H1 (cell line): ENCODE measurements at regions of chr16 and their contacts with region 1.

Region 1: GRCh38 chr16:4330277-4330874 is 14.5 kb downstream of the GLIS2 start:
- DNase-seq: peak in 1 of 2 experiments; percentile 91
- H3K4me3 ChIP-seq: no peak overlapping the region
- H3K27ac ChIP-seq: no peak overlapping the region
- H3K4me1 ChIP-seq: peaks cover 5 to 14% (median 10%) of the 10 kb centered on the region in 4 experiments
- H3K27me3 ChIP-seq: no peaks in the 10 kb centered on the region
- CTCF ChIP-seq: peak; percentile 84 to 98 (median 97)
- EP300 ChIP-seq: no peak
- POLR2A ChIP-seq: no peak
- RAD21 ChIP-seq: peak; percentile 86 to 94

Region 2: GRCh38 chr16:4277987-4278513 is 52.3 kb before region 1 on chr16:
- CTCF ChIA-PET with region 1: interaction called, 34 read pairs
- POLR2A ChIA-PET with region 1: interaction called, 69 read pairs
- DNase-seq: no peak
- H3K4me3 ChIP-seq: no peak overlapping the region
- H3K27ac ChIP-seq: no peak overlapping the region
- H3K4me1 ChIP-seq: no peaks in the 10 kb centered on the region; a peak in 3 of 7 replicates
- H3K27me3 ChIP-seq: no peaks in the 10 kb centered on the region; a peak in 1 of 7 replicates
- CTCF ChIP-seq: no peak
- EP300 ChIP-seq: no peak
- POLR2A ChIP-seq: no peak
- RAD21 ChIP-seq: no peak

Region 3: DNA sequence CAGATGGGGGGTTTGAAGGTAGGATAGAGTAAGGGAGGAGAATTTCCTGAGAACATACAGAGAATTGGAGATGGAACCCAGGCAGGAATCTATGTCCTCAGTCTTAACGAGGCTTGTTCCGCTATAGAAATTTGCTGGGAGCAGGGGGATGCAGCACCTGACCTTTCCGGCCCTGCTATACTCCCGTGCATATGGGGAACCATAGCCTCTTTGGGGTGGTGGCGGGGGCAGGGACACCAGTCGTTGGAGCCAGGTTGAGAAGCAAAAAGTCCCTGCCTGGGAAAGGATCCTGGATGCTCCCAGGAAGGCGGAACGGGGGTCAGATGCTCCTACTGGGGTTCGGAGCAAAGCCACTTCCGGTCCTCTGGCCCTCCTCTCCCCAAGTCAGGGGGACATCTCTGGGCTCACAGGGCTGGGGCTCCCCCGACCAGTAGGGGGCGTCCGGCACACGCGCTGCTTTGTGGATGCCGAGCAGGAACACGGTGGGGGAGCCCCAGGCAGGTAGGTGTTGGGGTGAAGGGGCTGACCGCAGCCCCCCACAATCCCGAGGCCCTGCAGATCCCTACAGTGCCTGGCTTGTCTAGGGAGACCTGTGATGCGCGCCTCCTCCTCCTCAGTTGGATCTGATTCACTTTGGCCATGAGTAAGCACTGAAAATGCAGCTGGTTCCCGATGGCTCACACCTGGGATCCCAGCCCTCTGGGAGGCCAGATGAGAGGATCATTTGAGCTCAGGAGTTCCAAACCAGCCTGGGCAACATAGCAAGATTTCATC is 42.0 kb before region 1 on chr16:
- CTCF ChIA-PET with region 1: interaction called, 132 read pairs
- POLR2A ChIA-PET with region 1: interaction called, 12 read pairs
- DNase-seq: peak in 1 of 2 experiments; percentile 98
- H3K4me3 ChIP-seq: peak overlapping the region in 2 of 4 experiments; percentile 2 to 16; a peak in 2 of 8 replicates
- H3K27ac ChIP-seq: peak overlapping the region; percentile 38; the same call in 1 of the 2 replicates
- H3K4me1 ChIP-seq: peaks cover 3 to 17% (median 8%) of the 10 kb centered on the region in 4 experiments
- H3K27me3 ChIP-seq: no peaks in the 10 kb centered on the region
- CTCF ChIP-seq: peak; percentile 94 to 98 (median 98)
- EP300 ChIP-seq: no peak
- POLR2A ChIP-seq: no peak
- RAD21 ChIP-seq: peak; percentile 84 to 93

Region 4: DNA sequence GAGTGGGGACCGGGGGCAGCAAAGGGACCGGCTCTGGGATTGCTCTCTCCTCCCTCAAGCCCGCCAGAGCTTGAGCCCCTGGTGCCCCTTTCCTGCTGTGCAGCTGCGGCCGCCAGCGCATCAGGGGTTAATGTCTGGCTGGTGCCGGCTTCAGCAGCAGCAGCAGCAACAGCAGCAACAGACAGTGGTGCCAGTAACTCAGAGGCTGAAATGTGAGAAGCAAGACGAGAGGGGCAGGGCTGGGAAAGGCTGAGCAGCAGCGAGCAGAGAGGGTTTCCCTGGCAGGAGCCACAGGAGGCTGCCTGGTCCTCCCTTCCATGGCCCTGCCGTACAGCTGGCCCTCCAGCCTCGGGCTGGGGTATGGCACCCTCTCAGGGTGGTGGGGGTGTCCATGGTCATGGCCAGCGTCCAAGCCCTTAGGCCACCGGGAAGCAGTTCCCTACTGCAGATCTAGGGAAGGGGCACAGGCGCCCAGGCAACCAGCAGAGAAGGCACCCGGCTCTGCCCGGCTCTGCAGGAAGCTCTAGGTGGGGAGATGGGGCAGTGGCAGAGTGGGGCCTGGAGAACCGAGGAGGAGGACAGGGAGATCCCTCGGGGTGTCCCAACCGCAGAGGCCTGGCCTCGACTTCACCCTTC is 36.4 kb before region 1 on chr16:
- CTCF ChIA-PET with region 1: interaction called, 132 read pairs
- POLR2A ChIA-PET with region 1: interaction called, 12 read pairs
- DNase-seq: peak in 1 of 2 experiments; percentile 82
- H3K4me3 ChIP-seq: peak overlapping the region in 3 of 4 experiments; percentile 24 to 50 (median 34); a peak in 6 of 8 replicates
- H3K27ac ChIP-seq: peak overlapping the region; percentile 67
- H3K4me1 ChIP-seq: peaks cover 7 to 23% (median 15%) of the 10 kb centered on the region in 4 experiments
- H3K27me3 ChIP-seq: no peaks in the 10 kb centered on the region
- CTCF ChIP-seq: peak in 1 of 3 experiments; percentile 1; a peak in 1 of 4 replicates
- EP300 ChIP-seq: peak in 1 of 2 experiments; percentile 65; a peak in 1 of 3 replicates
- POLR2A ChIP-seq: peak in 1 of 2 experiments; percentile 26; a peak in 1 of 3 replicates
- RAD21 ChIP-seq: peak in 1 of 2 experiments; percentile 25; a peak in 1 of 4 replicates

Region 5: GRCh38 chr16:4315186-4316109 is 14.9 kb before region 1 on chr16 and contains the start of gene GLIS2:
- CTCF ChIA-PET with region 1: interaction called, 182 read pairs
- POLR2A ChIA-PET with region 1: interaction called, 80 read pairs
- DNase-seq: peak in 1 of 2 experiments; percentile 73
- H3K4me3 ChIP-seq: peak within 1 kb of the TSS; percentile 63 to 92 (median 68)
- H3K27ac ChIP-seq: peak within 1 kb of the TSS; percentile 39; the same call in 1 of the 2 replicates
- H3K4me1 ChIP-seq: peaks cover 0 to 39% (median 33%) of the 10 kb centered on the region in 4 experiments; a peak in 6 of 7 replicates
- H3K27me3 ChIP-seq: peaks cover 0 to 15% (median 11%) of the 10 kb centered on the region in 4 experiments; a peak in 6 of 7 replicates
- CTCF ChIP-seq: no peak
- EP300 ChIP-seq: no peak
- POLR2A ChIP-seq: no peak; a peak in 1 of 3 replicates
- RAD21 ChIP-seq: no peak
- total RNA-seq, gene GLIS2: 17.4 and 18.6 TPM in 2 replicates

Region 6: GRCh38 chr16:4350787-4351659 is 20.6 kb after region 1 on chr16 and contains the start of gene PAM16:
- CTCF ChIA-PET with region 1: interaction called, 10 read pairs
- POLR2A ChIA-PET with region 1: interaction called, 154 read pairs
- DNase-seq: peak; percentile 87 to 100
- H3K4me3 ChIP-seq: peak within 1 kb of the TSS; percentile 91 to 97 (median 96)
- H3K27ac ChIP-seq: peak within 1 kb of the TSS; percentile 85
- H3K4me1 ChIP-seq: peaks cover 0 to 4% (median 0%) of the 10 kb centered on the region in 4 experiments; a peak in 1 of 7 replicates
- H3K27me3 ChIP-seq: peaks cover 0 to 2% (median 0%) of the 10 kb centered on the region in 4 experiments; a peak in 1 of 7 replicates
- CTCF ChIP-seq: no peak
- EP300 ChIP-seq: no peak
- POLR2A ChIP-seq: peak in 1 of 2 experiments; percentile 76; a peak in 2 of 3 replicates
- RAD21 ChIP-seq: no peak
- total RNA-seq, gene PAM16: 78.3 and 84.4 TPM in 2 replicates